Activated naive CD4-positive, alpha-beta T cell treated with anti-CD3 and anti-CD28 coated beads for 36 hours (primary cell): ENCODE measurements at regions of chr19 and their contacts with region 1.

Region 1: DNA sequence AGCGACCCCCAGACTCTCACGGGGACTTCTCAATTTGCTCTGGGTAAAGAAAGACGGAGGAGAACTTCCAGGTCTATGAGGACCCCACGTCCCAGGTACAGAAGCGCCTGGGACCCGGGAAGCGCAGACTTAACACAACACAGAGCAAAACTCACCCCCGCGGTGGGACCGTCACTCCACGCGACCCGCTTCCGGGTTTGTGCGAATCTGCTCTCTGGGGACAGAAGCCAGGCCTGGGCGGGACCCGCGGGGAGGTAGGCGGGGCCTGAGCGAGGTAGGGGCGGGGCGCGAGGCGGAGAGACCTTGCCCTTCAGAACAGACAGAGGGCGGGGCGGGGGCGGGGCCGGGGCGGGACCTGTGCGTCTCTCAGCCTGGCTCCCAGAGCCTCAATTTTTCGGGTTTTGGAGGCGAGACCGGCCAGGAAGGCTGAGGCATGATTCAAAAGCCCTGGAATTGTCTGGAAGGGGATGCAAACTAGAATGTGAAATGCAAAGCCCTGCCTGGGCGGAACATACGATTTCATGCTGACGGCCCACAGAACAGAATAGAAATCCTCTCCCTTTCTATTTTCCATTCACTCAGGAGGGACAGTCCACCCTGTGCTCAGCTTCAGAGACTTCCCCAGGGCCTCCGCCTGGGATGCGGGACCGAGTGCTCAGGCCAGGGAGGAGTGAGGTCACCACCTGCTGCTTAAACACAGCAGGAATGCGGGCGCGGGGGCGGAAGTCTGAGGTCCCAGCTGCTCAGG is 19.3 kb upstream of the ZNF888 start:
- DNase-seq: peak; percentile 95
- H3K4me3 Mint-ChIP-seq: peak overlapping the region; percentile 87
- H3K27ac Mint-ChIP-seq: peak overlapping the region; percentile 65
- H3K4me1 Mint-ChIP-seq: peaks cover 16% of the 10 kb centered on the region
- H3K27me3 Mint-ChIP-seq: no peaks in the 10 kb centered on the region

Region 2: DNA sequence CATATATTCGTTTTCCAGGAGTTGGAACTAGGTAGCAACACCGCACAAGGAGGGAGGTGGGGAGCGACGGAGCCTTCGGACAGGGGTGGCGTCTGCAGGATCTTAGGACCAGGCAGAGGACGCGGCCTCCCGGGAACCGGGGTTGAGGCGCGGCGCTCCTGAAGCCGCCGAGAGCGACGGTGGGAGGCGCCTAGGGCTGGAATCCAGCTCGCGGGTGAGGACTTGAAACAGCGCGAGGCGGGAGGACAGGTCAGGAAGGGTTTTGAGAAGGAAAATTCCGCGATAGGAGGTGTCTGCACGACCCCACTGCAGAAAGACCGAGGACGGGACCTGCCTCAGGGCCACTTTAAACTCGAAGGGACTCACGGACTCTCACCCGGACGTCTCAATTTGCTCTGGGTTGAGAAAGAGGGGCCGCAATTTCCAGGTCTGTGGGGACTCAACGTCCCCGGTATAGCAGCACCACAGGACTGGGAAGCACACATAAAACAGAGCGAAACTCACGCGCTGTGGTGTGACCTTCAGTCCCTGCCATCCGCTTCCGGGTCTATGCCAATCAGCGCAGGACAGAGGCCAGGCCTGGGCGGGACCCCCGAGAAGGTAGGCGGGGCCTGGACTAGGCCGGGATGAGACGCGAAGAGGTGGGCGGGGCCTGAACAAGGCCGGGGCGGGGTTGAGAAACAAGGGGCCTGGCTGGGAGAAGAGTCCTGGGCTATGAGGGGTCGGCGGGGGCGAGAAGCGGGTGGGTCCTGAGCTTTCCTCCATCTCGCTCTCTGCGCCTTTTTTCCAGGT is 45.2 kb before region 1 on chr19 and contains the start of gene ZNF320:
- CTCF ChIA-PET with region 1: no interaction called
- intact Hi-C with region 1: loop called (anchors 1 kb)
- DNase-seq: peak; percentile 95
- H3K4me3 Mint-ChIP-seq: peak within 1 kb of the TSS; percentile 84
- H3K27ac Mint-ChIP-seq: peak within 1 kb of the TSS; percentile 89
- H3K4me1 Mint-ChIP-seq: peaks cover 7% of the 10 kb centered on the region
- H3K27me3 Mint-ChIP-seq: no peaks in the 10 kb centered on the region
- total RNA-seq, gene ZNF320: 4.2 to 4.6 TPM

Region 3: DNA sequence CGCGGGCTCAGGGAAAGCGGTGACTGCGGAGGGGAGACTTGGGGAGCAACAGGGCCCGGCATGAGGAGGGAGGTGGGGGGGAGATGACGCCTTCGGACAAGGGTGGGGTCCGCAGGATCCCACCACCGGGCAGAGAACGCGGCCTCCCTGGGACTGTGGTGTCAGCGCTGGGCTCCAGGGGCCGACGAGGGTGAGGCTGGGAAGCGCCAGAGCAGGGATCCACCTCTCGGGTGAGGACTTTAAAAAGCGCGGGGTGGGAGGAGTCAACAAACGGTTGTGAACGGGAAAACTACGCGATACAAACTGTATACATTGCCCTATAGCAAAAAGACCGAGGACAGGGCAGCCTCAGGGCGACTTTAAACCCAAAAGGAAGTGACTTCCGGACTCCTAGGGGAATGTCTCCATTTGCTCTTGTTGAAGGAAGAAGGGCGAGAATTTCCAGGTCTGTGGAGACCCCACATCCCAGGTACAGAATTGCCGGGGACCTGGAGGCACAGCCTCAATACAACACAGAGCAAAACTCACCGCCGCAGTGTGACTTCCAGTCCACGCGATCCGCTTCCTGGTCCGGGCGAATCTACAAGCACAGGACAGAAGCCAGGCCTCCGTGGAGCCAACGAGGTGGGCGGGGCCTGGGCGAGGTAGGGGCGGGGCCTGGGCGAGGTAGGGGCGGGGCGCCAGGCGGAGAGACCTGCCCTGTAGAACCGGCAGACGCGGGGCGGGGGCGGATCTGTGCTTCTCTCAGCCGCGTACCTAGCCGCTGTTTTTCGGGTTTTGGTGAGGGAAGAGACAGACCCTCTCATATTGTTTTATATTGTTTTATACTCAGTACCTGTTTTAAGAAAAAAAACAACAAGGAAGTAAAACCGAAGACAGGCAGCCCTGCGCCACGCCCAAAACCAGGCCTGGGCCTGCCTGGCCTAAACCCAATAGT is 19.5 kb before region 1 on chr19 and contains the start of gene ZNF888:
- CTCF ChIA-PET with region 1: no interaction called
- intact Hi-C with region 1: loop called (anchors 2 kb)
- DNase-seq: peak; percentile 92
- H3K4me3 Mint-ChIP-seq: peak within 1 kb of the TSS; percentile 91
- H3K27ac Mint-ChIP-seq: peak within 1 kb of the TSS; percentile 85
- H3K4me1 Mint-ChIP-seq: peaks cover 18% of the 10 kb centered on the region
- H3K27me3 Mint-ChIP-seq: peaks cover 4% of the 10 kb centered on the region
- total RNA-seq, gene ZNF888: 4.1 to 4.3 TPM

Region 4: DNA sequence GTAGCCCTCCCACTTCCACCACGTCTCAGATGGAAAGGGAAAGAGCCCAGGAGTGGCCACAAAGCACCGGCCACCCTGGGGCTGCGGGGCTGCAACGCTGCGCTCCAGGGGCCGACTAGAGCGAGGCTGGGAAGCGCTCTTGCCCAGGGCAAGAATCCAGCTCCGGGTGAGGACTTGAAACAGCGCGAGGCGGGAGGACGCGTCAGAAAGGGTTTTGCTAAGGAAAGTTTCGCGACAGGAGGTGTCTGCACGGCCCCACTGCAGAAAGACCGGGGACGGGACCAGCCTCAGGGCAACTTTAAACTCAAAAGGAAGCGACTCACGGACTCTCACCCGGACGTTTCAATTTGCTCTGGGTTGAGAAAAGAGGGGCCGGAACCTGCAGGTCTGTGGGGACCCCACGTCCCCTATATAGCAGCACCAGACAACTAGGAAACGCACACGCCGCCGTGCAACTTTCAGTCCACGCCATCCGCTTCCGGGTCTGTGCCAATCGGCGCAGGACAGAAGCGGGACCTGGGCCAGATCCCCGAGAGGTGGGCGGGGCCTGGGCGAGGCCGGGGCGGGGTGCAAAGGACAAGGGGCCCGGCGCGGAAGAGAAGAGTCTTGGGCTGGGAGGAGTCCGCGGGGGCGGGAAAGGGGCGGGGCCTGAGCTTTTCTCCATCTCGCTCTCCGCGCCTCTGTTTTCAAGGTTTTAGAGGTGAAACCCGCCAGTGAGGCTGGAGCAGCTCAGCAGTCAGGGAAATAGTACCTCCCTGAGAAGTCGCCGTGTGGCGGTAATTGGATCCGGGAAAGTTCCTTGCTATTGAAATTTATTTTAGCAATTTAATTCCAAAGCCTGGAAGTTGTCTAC is 20.1 kb after region 1 on chr19 and contains the start of gene ZNF816:
- CTCF ChIA-PET with region 1: no interaction called
- intact Hi-C with region 1: no loop called
- DNase-seq: peak; percentile 99
- H3K4me3 Mint-ChIP-seq: peak within 1 kb of the TSS; percentile 85
- H3K27ac Mint-ChIP-seq: peak within 1 kb of the TSS; percentile 87
- H3K4me1 Mint-ChIP-seq: peaks cover 16% of the 10 kb centered on the region
- H3K27me3 Mint-ChIP-seq: no peaks in the 10 kb centered on the region
- total RNA-seq, gene ZNF816: 10.4 to 10.7 TPM

Region 5: DNA sequence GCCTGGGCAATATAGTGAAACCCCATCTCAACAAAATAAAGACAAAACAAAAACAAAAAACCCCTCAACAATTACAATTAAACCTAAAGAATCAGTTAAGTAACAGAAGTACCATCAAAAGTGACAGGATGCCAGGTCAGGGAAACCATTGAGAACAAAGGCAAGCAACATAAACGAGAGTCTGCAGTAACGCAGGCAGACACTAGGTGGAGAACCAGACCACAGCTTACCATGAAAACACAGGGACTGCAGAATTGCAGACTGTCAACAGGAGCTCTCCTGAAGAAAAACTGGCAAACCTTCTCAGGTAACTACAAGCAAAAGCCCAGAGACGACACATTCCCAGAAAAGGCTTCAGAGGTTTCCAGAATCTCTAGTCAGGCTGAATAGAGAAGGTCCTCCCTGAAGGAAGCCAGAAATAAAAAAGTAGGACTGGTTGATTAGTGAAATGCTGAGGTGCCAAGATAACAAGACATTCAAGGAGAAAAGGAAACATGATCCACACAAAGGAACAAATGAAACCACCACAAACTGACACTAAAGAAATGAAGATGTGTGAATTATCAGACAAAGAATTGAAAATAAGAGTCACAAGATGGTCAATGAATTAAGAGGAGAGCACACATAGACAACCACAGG is 252.8 kb after region 1 on chr19:
- CTCF ChIA-PET with region 1: no interaction called
- intact Hi-C with region 1: no loop called
- DNase-seq: peak; percentile 88
- H3K4me3 Mint-ChIP-seq: no peak overlapping the region
- H3K27ac Mint-ChIP-seq: peak overlapping the region; percentile 37
- H3K4me1 Mint-ChIP-seq: peaks cover 31% of the 10 kb centered on the region
- H3K27me3 Mint-ChIP-seq: peaks cover 2% of the 10 kb centered on the region

Region 6: GRCh38 chr19:53394974-53395839 is 452.6 kb after region 1 on chr19 and contains the start of gene ZNF765:
- CTCF ChIA-PET with region 1: no interaction called
- intact Hi-C with region 1: loop called (anchors 1 kb)
- DNase-seq: peak; percentile 97
- H3K4me3 Mint-ChIP-seq: peak within 1 kb of the TSS; percentile 88
- H3K27ac Mint-ChIP-seq: peak within 1 kb of the TSS; percentile 90
- H3K4me1 Mint-ChIP-seq: peaks cover 27% of the 10 kb centered on the region
- H3K27me3 Mint-ChIP-seq: no peaks in the 10 kb centered on the region
- total RNA-seq, gene ZNF765: 7.9 to 8.0 TPM